ENCODE measurements at regions of chr17 and their contacts with region 1.

Region 1: DNA sequence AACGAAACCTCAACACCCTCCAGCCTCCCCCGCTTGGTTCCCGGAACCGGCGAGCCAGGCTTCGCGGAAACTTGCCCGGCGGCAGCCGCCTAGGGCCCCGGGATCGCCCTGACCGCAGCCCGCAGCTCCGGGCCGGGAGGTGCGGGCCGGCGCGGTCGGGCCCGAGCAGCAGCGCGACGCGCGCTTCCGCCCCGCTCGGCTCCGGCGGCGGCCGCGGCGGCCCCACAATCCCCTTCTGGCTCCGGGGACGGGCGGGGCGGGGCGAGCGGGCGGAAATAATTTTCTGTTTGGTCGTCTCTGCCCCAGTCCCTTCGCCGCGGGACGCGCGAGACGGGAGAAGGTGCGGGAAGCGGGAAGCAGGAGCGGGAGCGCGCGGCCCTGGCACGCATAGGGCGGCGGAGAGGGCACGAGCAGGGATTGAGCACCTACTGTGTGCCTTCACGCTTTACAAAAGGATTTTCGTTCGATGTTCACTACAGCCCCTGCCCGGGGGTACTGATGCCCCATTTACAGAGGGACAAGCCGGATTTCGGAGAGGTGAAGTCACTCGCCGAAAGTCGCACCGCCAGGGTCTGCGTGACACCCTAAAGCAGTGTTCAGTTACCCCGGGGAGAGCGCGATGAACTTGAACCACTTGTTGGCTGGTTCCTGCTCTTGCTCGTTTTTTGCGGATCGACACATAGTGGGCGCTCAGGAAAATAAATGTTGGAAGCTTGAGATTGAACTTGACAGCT is 2.7 kb upstream of the MLLT6 start:
- DNase-seq: peak; percentile 57 to 84 (median 74)
- ATAC-seq: peak; percentile 41 to 48
- H3K4me3 Mint-ChIP-seq: peak overlapping the region; percentile 92 to 99 (median 98)
- H3K27ac Mint-ChIP-seq: peak overlapping the region; percentile 92 to 99 (median 97)
- H3K4me1 Mint-ChIP-seq: peaks cover 31 to 50% (median 47%) of the 10 kb centered on the region in 4 donors
- H3K27me3 Mint-ChIP-seq: peaks cover 0 to 2% (median 0%) of the 10 kb centered on the region in 5 donors

Region 2: GRCh38 chr17:38557836-38558727 is 144.3 kb before region 1 on chr17:
- POLR2A ChIA-PET with region 1: interaction called, 11 read pairs
- DNase-seq: peak; percentile 79 to 91 (median 86)
- ATAC-seq: peak; percentile 72 to 76
- H3K4me3 Mint-ChIP-seq: peak overlapping the region; percentile 89 to 98 (median 96)
- H3K27ac Mint-ChIP-seq: peak overlapping the region in 3 of 10 donors; percentile 64 to 95 (median 70)
- H3K4me1 Mint-ChIP-seq: peaks cover 17 to 34% (median 27%) of the 10 kb centered on the region in 4 donors
- H3K27me3 Mint-ChIP-seq: peaks cover 6 to 26% (median 19%) of the 10 kb centered on the region in 5 donors

Region 3: DNA sequence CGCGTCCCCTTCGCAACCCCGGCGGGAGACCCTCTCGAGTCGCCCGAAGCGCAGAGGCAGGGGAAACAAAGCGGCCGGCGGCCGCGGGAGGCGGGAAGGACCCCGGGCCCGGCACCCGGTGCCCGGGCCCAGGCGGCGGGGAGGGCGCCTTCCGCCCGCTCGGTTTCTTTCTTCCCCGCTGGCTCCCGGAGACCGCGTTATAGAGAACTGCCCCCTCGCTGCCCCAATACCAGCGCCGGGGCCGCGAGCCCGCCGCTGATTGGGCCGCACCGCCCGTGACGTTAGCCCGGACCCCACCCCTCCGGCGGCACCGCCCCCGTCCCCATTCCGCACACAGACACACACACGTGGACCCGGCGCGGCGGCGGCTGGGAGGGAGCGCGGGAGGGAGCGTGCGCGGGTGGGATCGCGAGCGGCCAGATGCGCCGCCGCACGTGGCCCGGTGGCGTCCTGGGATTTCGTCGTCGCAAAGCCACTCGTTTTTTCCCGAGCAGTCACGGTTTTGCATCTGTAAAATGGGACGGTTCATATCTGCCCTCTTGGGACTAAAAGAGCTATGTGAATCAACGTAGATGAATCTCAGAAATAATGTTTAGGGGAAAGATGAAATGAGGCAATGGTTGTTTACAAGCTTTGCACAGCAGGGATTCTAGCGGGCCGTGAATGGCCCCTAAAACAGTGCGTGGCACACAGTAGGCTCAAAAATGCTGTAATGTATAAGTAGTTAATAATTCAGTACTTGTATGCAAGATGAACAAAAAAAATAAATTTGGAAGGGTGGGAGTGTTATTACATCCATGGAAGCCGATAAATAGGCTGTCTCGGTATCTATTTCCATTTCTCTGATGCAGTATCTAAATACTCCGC is 27.4 kb before region 1 on chr17 and contains the start of gene EPOP:
- POLR2A ChIA-PET with region 1: interaction called, 55 read pairs
- DNase-seq: peak; percentile 64 to 88 (median 76)
- ATAC-seq: peak; percentile 85 to 87
- H3K4me3 Mint-ChIP-seq: peak within 1 kb of the TSS; percentile 63 to 84 (median 70)
- H3K27ac Mint-ChIP-seq: peak within 1 kb of the TSS in 5 of 10 donors; percentile 0 to 64 (median 27)
- H3K4me1 Mint-ChIP-seq: peaks cover 10 to 31% (median 25%) of the 10 kb centered on the region in 4 donors
- H3K27me3 Mint-ChIP-seq: peaks cover 11 to 32% (median 28%) of the 10 kb centered on the region in 5 donors
- polyA plus RNA-seq, gene EPOP: 0.04 to 0.10 TPM in 2 of 3 donors, not detected in the other

Region 4: DNA sequence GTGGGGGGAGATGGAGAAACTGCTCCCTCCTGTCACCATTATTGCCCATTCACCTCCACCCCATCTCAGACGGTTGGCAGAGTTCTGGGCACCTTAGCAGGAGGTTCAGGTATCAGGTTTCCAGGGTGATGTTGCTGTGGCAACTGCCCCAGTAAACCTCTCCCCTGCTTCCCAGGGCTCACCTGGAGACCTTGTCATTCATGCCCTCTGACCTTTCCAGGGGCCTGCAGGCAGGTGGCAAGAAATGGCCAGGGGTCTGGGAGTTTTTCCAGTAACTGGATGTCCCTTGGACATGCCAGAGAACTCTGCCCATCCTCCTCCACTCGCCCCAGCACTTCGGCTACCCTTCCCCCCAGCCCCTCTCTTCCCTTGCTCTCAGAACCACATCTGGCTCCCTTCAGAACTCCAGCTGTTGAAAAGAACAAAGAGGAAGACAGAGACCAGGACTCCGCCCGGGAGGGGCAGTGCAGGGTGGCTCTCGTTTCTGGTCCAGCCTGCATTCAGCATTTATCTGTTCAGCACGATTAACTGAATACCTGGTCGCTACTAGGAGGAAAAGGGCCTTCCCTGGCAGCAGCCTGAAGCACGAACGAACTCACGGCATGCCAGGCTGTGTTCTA is 11.2 kb after region 1 on chr17:
- POLR2A ChIA-PET with region 1: interaction called, 395 read pairs
- DNase-seq: no peak
- ATAC-seq: no peak
- H3K4me3 Mint-ChIP-seq: no peak overlapping the region
- H3K27ac Mint-ChIP-seq: peak overlapping the region in 3 of 10 donors; percentile 17 to 76 (median 38)
- H3K4me1 Mint-ChIP-seq: peaks cover 26 to 46% (median 38%) of the 10 kb centered on the region in 4 donors
- H3K27me3 Mint-ChIP-seq: no peaks in the 10 kb centered on the region

Region 5: GRCh38 chr17:38729886-38730525 is 27.7 kb after region 1 on chr17 and contains the start of gene CISD3:
- POLR2A ChIA-PET with region 1: interaction called, 395 read pairs
- DNase-seq: peak; percentile 73 to 90 (median 84)
- ATAC-seq: peak; percentile 78 to 80
- H3K4me3 Mint-ChIP-seq: peak within 1 kb of the TSS; percentile 84 to 98 (median 95)
- H3K27ac Mint-ChIP-seq: peak within 1 kb of the TSS; percentile 88 to 97 (median 96)
- H3K4me1 Mint-ChIP-seq: peaks cover 30 to 83% (median 82%) of the 10 kb centered on the region in 4 donors
- H3K27me3 Mint-ChIP-seq: peaks cover 0 to 2% (median 0%) of the 10 kb centered on the region in 5 donors
- polyA plus RNA-seq, gene CISD3: 40.5 to 63.3 (median 46.2) TPM

Region 6: DNA sequence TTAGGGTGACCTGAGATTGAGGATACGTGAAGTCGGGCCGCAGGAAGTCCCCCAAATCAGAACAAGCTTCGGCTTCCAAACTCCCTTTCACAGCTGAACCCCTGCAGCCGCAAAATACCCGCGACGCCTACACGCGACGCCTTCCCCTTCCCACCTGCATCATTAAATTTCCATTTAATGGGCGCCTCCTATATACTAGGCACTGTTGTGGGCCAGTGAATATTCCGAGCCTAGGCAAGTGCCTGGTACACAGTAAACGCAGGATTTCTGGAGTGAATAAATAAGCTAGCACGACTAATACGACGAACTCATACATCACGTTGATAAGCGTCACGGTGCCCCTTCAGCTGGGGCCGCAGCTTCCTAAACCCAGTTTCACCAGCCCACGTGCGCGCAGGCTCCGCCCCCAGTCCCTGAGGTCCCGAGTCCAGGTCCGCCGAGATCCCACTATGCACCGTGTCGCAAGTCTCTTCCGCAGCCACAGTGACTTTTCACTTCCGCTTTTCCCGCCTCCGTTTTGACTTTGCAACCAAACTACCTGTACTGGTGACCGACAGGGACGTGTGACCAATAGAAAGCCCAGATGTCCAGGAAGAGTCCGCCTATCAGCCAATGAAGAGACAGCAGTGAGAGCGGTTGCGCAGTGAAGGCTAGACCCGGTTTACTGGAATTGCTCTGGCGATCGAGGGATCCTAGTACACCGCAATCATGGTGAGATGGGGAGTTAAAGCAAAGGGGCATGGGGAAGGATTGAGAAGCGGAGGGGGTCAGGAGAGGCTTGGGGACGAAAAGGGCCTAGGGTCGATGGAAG is 50.0 kb after region 1 on chr17 and contains the start of gene PSMB3:
- POLR2A ChIA-PET with region 1: interaction called, 22 read pairs
- DNase-seq: peak; percentile 85 to 98 (median 96)
- ATAC-seq: peak; percentile 89 to 90
- H3K4me3 Mint-ChIP-seq: peak within 1 kb of the TSS; percentile 87 to 100 (median 99)
- H3K27ac Mint-ChIP-seq: peak within 1 kb of the TSS; percentile 93 to 100 (median 98)
- H3K4me1 Mint-ChIP-seq: peaks cover 22 to 64% (median 59%) of the 10 kb centered on the region in 4 donors
- H3K27me3 Mint-ChIP-seq: peaks cover 1 to 33% (median 14%) of the 10 kb centered on the region in 5 donors
- polyA plus RNA-seq, gene PSMB3: 338 to 361 (median 349) TPM

Measured in naive thymus-derived CD8-positive, alpha-beta T cell (primary cell).